ENCODE measurements at regions of chr10 and their contacts with region 1.

Region 1: DNA sequence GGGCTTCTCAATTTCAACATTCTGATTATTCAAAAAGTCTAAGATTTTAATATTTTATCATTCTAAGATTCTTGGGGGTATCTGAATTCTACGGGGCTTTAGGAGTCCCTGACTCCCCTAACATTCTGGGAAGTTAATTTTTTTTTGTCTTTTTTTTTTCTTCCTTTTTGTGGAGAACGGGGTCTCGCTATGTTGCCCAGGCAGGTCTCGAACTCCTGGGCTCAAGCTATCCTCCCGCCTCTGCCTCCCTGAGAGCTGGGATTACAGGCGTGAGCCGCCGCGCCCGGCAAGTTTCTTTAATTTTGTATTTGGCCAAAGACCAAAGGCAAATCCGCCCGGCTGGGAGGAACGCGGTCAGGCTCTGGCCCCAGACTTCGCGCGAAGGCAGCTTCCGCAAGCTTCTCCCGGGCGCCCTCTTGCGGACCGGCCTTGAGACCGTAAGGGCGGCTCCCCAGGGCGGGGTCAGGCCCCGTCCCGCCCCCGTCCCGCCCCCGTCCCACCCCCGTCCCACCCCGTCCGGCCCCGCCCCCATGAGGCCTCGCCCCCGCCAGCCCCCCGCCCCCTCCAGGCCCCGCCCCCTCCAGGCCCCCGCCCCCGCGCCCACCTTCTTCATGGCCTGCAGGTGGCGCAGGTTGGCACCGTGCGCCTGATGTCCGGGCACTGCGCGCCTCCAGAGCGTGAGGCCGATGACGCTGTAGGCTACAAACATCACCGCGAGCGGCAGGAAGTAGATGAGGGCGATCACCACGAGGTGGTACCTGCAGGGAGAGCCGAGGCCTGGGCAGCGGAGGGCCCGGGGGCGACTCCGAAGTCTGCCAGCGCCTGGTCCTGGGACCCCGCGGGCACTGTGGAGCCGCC is 8.2 kb downstream of the TACR2 start:
- DNase-seq: peak; percentile 77 to 97 (median 89)
- ATAC-seq: peak; percentile 88
- H3K4me3 ChIP-seq: peak overlapping the region; percentile 37 to 49
- H3K4me3 Mint-ChIP-seq: peak overlapping the region; percentile 49
- H3K27ac ChIP-seq: peak overlapping the region; percentile 72 to 75
- H3K27ac Mint-ChIP-seq: peak overlapping the region; percentile 94
- H3K4me1 ChIP-seq: peaks cover 18% of the 10 kb centered on the region
- H3K4me1 Mint-ChIP-seq: peaks cover 20% of the 10 kb centered on the region
- H3K27me3 ChIP-seq: no peaks in the 10 kb centered on the region
- H3K27me3 Mint-ChIP-seq: no peaks in the 10 kb centered on the region
- CTCF ChIP-seq: peak; percentile 72

Region 2: GRCh38 chr10:68955832-68956532 is 452.6 kb before region 1 on chr10 and contains the start of gene DDX21:
- CTCF ChIA-PET with region 1: no interaction called
- POLR2A ChIA-PET with region 1: no interaction called
- intact Hi-C with region 1: loop called in 1 of 2 experiments (anchors 5 kb)
- DNase-seq: peak; percentile 68 to 95 (median 89)
- ATAC-seq: peak; percentile 75
- H3K4me3 ChIP-seq: peak within 1 kb of the TSS; percentile 85 to 96
- H3K4me3 Mint-ChIP-seq: peak within 1 kb of the TSS; percentile 100
- H3K27ac ChIP-seq: peak within 1 kb of the TSS; percentile 95 to 99
- H3K27ac Mint-ChIP-seq: peak within 1 kb of the TSS; percentile 100
- H3K4me1 ChIP-seq: peaks cover 21% of the 10 kb centered on the region
- H3K4me1 Mint-ChIP-seq: peaks cover 41% of the 10 kb centered on the region
- H3K27me3 ChIP-seq: no peaks in the 10 kb centered on the region
- H3K27me3 Mint-ChIP-seq: no peaks in the 10 kb centered on the region
- CTCF ChIP-seq: peak; percentile 71
- total RNA-seq, gene DDX21: 175 to 185 TPM

Region 3: DNA sequence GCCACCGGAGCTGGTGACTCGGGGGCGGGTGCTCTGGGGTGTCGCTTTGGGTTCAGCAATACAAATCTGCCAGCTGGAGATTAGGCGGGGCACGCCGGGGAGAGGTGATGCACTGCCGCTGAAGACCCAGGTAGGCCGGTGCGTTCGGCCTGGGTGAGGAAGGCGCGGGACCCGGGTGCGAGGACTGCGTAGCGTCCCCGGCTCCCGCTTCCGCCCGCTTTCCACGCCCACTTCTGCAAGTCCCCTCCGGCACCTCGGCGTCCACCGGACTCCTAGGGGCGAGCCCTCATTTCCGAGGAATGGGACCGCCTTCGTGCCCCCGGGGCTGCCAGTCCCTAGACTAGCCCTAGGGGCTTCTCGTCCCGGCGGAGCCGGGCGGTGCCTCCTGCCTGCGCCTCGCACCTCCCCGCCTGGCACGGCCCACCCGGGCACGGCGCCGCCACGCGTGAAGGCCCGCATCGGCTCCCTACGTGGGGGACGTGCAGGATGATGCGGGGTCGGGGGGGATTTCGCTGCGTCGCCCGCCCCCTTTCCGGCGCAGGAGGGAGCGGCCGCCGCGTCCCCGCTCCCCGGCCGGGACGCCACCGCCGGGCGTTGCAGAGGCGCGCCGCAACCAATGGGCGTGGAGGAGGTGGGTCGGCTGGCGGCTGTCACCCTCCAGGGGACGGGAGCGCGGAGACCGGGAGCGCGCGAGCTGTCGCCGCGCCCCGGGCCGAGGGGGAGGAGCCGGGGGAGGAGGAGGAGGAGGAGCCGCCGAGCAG is 90.3 kb before region 1 on chr10:
- CTCF ChIA-PET with region 1: interaction called, 4 read pairs
- POLR2A ChIA-PET with region 1: interaction called, 3 read pairs
- intact Hi-C with region 1: loop called (anchors 1 to 2 kb)
- DNase-seq: peak; percentile 81 to 96 (median 90)
- ATAC-seq: peak; percentile 89
- H3K4me3 ChIP-seq: peak overlapping the region; percentile 92 to 99
- H3K4me3 Mint-ChIP-seq: peak overlapping the region; percentile 95
- H3K27ac ChIP-seq: peak overlapping the region; percentile 89 to 92
- H3K27ac Mint-ChIP-seq: peak overlapping the region; percentile 89
- H3K4me1 ChIP-seq: peaks cover 32% of the 10 kb centered on the region
- H3K4me1 Mint-ChIP-seq: peaks cover 38% of the 10 kb centered on the region
- H3K27me3 ChIP-seq: no peaks in the 10 kb centered on the region
- H3K27me3 Mint-ChIP-seq: no peaks in the 10 kb centered on the region
- CTCF ChIP-seq: no peak

Region 4: DNA sequence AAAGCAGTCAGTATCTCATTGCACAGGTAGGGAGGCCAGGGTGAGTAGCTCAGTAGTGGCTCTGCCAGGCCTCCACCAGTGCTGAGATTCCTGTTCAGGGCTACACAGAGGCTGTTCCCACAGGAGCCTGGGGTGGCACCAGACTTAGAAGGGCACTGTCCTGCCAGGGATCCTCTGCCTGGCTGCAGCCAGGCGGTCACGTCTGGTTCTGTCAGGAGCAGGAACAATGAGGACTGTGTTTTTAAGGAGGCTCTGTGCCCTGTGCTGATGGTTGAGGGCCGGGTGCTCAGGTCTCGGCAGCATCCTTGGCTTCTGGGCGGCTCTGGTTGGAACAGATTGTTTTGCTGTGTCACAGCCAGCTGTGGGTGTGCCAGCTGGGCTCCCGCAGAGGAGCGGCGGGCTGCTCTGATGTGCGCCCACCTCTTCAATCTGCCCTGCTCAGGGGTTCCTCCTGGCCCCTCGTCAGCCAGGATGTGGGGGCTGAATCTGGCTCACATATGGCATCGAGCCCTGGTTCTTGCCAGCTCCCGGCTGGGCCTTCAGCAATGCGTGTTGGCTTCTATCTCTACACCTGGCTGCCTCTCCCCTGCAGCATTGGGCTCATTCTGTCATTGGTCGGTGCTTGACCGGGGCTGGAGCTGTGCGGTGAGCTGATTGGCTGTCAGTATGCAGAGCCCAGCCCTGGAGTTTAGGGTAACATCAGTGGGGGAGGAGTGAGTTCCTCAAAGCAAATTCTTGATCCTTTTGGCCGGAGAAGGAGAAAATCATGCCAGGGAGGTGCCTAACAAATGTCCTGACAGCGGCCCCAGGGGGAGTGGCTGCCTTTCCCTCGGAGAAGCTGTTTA is 33.0 kb before region 1 on chr10:
- CTCF ChIA-PET with region 1: no interaction called
- POLR2A ChIA-PET with region 1: no interaction called
- intact Hi-C with region 1: no loop called
- DNase-seq: peak in 1 of 9 experiments; percentile 26
- ATAC-seq: peak; percentile 46
- H3K4me3 ChIP-seq: no peak overlapping the region
- H3K4me3 Mint-ChIP-seq: no peak overlapping the region
- H3K27ac ChIP-seq: no peak overlapping the region
- H3K27ac Mint-ChIP-seq: peak overlapping the region; percentile 84
- H3K4me1 ChIP-seq: peaks cover 21% of the 10 kb centered on the region
- H3K4me1 Mint-ChIP-seq: peaks cover 30% of the 10 kb centered on the region
- H3K27me3 ChIP-seq: no peaks in the 10 kb centered on the region
- H3K27me3 Mint-ChIP-seq: no peaks in the 10 kb centered on the region
- CTCF ChIP-seq: no peak

Region 5: GRCh38 chr10:69425511-69426298 is 17.2 kb after region 1 on chr10:
- CTCF ChIA-PET with region 1: interaction called, 5 read pairs
- POLR2A ChIA-PET with region 1: interaction called, 3 read pairs
- intact Hi-C with region 1: loop called in 1 of 2 experiments (anchors 2 kb)
- DNase-seq: peak in 5 of 9 experiments; percentile 23 to 76 (median 65)
- ATAC-seq: peak; percentile 84
- H3K4me3 ChIP-seq: no peak overlapping the region
- H3K4me3 Mint-ChIP-seq: no peak overlapping the region
- H3K27ac ChIP-seq: peak overlapping the region; percentile 32 to 44
- H3K27ac Mint-ChIP-seq: peak overlapping the region; percentile 69
- H3K4me1 ChIP-seq: peaks cover 36% of the 10 kb centered on the region
- H3K4me1 Mint-ChIP-seq: peaks cover 53% of the 10 kb centered on the region
- H3K27me3 ChIP-seq: no peaks in the 10 kb centered on the region
- H3K27me3 Mint-ChIP-seq: no peaks in the 10 kb centered on the region
- CTCF ChIP-seq: no peak

Region 6: GRCh38 chr10:69515699-69516259 is 107.2 kb after region 1 on chr10:
- CTCF ChIA-PET with region 1: interaction called, 16 read pairs
- POLR2A ChIA-PET with region 1: interaction called, 3 read pairs
- intact Hi-C with region 1: no loop called
- DNase-seq: peak; percentile 59 to 87 (median 78)
- ATAC-seq: peak; percentile 97
- H3K4me3 ChIP-seq: no peak overlapping the region
- H3K4me3 Mint-ChIP-seq: no peak overlapping the region
- H3K27ac ChIP-seq: no peak overlapping the region
- H3K27ac Mint-ChIP-seq: no peak overlapping the region
- H3K4me1 ChIP-seq: no peaks in the 10 kb centered on the region
- H3K4me1 Mint-ChIP-seq: no peaks in the 10 kb centered on the region
- H3K27me3 ChIP-seq: no peaks in the 10 kb centered on the region
- H3K27me3 Mint-ChIP-seq: peaks cover 30% of the 10 kb centered on the region
- CTCF ChIP-seq: peak; percentile 81

Region 7: GRCh38 chr10:70007116-70007820 is 598.7 kb after region 1 on chr10:
- CTCF ChIA-PET with region 1: no interaction called
- POLR2A ChIA-PET with region 1: no interaction called
- intact Hi-C with region 1: no loop called
- DNase-seq: no peak
- ATAC-seq: no peak
- H3K4me3 ChIP-seq: no peak overlapping the region
- H3K4me3 Mint-ChIP-seq: no peak overlapping the region
- H3K27ac ChIP-seq: no peak overlapping the region
- H3K27ac Mint-ChIP-seq: no peak overlapping the region
- H3K4me1 ChIP-seq: no peaks in the 10 kb centered on the region
- H3K4me1 Mint-ChIP-seq: no peaks in the 10 kb centered on the region
- H3K27me3 ChIP-seq: peaks cover 0 to 2% of the 10 kb centered on the region in 2 experiments
- H3K27me3 Mint-ChIP-seq: peaks cover 47% of the 10 kb centered on the region
- CTCF ChIP-seq: no peak

Region 8: GRCh38 chr10:70404036-70404786 is 995.7 kb after region 1 on chr10 and contains the start of gene EIF4EBP2:
- CTCF ChIA-PET with region 1: no interaction called
- POLR2A ChIA-PET with region 1: no interaction called
- intact Hi-C with region 1: loop called in 1 of 2 experiments (anchors 5 kb)
- DNase-seq: peak; percentile 95 to 100 (median 98)
- ATAC-seq: peak; percentile 97
- H3K4me3 ChIP-seq: peak within 1 kb of the TSS; percentile 63 to 77
- H3K4me3 Mint-ChIP-seq: peak within 1 kb of the TSS; percentile 97
- H3K27ac ChIP-seq: peak within 1 kb of the TSS; percentile 73 to 76
- H3K27ac Mint-ChIP-seq: peak within 1 kb of the TSS; percentile 93
- H3K4me1 ChIP-seq: peaks cover 23% of the 10 kb centered on the region
- H3K4me1 Mint-ChIP-seq: peaks cover 46% of the 10 kb centered on the region
- H3K27me3 ChIP-seq: no peaks in the 10 kb centered on the region
- H3K27me3 Mint-ChIP-seq: no peaks in the 10 kb centered on the region
- CTCF ChIP-seq: no peak
- total RNA-seq, gene EIF4EBP2: 22.4 TPM

Measured in CD8-positive, alpha-beta T cell (primary cell).